Endothelial cell of umbilical vein (primary cell): ENCODE measurements at regions of chr11 and their contacts with region 1.

Region 1: GRCh38 chr11:1598816-1599215 is 722 bp upstream of the KRTAP5-2 start:
- DNase-seq: no peak
- H3K4me3 ChIP-seq: no peak overlapping the region
- H3K27ac ChIP-seq: no peak overlapping the region
- H3K4me1 ChIP-seq: no peaks in the 10 kb centered on the region
- H3K27me3 ChIP-seq: peaks cover 0 to 5% of the 10 kb centered on the region in 2 experiments
- CTCF ChIP-seq: no peak
- POLR2A ChIP-seq: no peak

Region 2: DNA sequence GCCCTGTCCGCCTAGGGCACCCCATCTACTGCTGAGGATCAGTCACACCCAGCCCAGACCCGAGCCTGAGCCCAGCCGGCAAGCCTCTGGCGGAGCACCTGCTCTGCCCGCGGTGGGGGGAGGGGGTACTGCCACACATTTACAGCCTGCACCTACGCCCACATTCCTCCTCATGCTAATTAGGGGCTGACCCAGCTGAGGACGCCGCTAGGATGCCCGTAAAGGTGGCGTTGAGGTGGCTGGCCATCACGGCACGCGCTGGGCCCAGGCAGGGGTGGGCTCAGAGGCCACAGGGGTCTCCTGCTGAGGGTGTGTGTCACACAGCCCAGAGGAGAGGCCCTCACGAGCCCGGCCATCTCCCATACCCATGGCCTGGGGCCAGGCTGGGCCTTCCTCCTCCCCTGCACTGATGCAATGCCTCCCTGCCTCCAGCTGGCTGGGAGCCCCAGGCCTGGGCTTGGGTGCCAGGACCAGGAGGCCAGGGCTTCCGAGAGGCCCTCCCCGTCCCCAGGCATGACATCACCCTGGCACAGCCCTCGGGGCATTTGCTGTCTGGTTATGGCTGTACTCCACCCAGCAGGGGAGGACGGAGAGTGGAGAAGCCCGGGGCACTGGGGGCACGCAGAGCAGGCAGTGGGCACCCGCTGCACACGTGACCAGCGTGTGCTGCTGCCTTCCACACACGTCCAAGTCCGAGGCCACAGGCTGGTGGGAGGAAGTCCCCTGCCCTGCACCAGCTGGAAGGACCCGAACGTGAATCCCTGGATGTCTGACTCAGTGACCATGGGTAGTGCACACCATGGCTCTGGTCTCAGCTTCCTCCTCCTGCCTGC is 39.5 kb before region 1 on chr11:
- CTCF ChIA-PET with region 1: interaction called, 10 read pairs
- POLR2A ChIA-PET with region 1: no interaction called
- dilution Hi-C with region 1: no loop called
- intact Hi-C with region 1: no loop called
- DNase-seq: no peak
- H3K4me3 ChIP-seq: no peak overlapping the region
- H3K27ac ChIP-seq: no peak overlapping the region
- H3K4me1 ChIP-seq: no peaks in the 10 kb centered on the region
- H3K27me3 ChIP-seq: no peaks in the 10 kb centered on the region
- CTCF ChIP-seq: no peak
- POLR2A ChIP-seq: no peak

Region 3: GRCh38 chr11:1586699-1587098 is 12.1 kb before region 1 on chr11:
- CTCF ChIA-PET with region 1: interaction called, 16 read pairs
- POLR2A ChIA-PET with region 1: no interaction called
- dilution Hi-C with region 1: no loop called
- intact Hi-C with region 1: no loop called
- DNase-seq: no peak
- H3K4me3 ChIP-seq: no peak overlapping the region
- H3K27ac ChIP-seq: no peak overlapping the region
- H3K4me1 ChIP-seq: peaks cover 7% of the 10 kb centered on the region
- H3K27me3 ChIP-seq: no peaks in the 10 kb centered on the region
- CTCF ChIP-seq: no peak
- POLR2A ChIP-seq: no peak

Region 4: DNA sequence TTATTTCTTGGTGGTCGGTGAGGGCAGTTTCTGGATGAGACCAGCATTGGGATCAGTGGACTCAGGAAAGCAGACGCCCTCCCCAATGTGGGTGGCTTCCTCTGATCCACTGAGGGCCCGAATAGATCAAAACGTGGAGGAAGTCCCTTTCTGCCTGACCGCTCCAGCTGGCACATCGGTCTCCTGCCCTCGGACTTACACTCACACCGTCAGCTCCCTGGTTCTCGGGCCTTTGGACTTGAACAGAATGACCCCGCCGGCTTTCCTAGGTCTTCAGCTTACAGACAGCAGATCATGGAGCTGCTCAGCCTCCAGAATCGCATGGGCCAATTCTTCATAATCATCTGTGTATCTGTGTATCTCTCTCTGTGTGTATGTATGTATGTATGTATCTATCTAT is 14.7 kb after region 1 on chr11:
- CTCF ChIA-PET with region 1: interaction called, 24 read pairs
- POLR2A ChIA-PET with region 1: no interaction called
- dilution Hi-C with region 1: no loop called
- intact Hi-C with region 1: no loop called
- DNase-seq: no peak
- H3K4me3 ChIP-seq: no peak overlapping the region
- H3K27ac ChIP-seq: no peak overlapping the region
- H3K4me1 ChIP-seq: no peaks in the 10 kb centered on the region
- H3K27me3 ChIP-seq: peaks cover 2 to 4% of the 10 kb centered on the region in 2 experiments
- CTCF ChIP-seq: no peak
- POLR2A ChIP-seq: no peak

Region 5: GRCh38 chr11:1619449-1619848 is 20.6 kb after region 1 on chr11:
- CTCF ChIA-PET with region 1: interaction called, 24 read pairs
- POLR2A ChIA-PET with region 1: no interaction called
- dilution Hi-C with region 1: no loop called
- intact Hi-C with region 1: loop called (anchors 1 kb)
- DNase-seq: no peak
- H3K4me3 ChIP-seq: no peak overlapping the region
- H3K27ac ChIP-seq: no peak overlapping the region
- H3K4me1 ChIP-seq: no peaks in the 10 kb centered on the region
- H3K27me3 ChIP-seq: peaks cover 2 to 4% of the 10 kb centered on the region in 2 experiments
- CTCF ChIP-seq: no peak
- POLR2A ChIP-seq: no peak

Region 6: GRCh38 chr11:1628506-1629325 is 29.9 kb after region 1 on chr11:
- CTCF ChIA-PET with region 1: interaction called, 25 read pairs
- POLR2A ChIA-PET with region 1: no interaction called
- dilution Hi-C with region 1: no loop called
- intact Hi-C with region 1: loop called (anchors 2 kb)
- DNase-seq: peak; percentile 34
- H3K4me3 ChIP-seq: no peak overlapping the region
- H3K27ac ChIP-seq: no peak overlapping the region
- H3K4me1 ChIP-seq: no peaks in the 10 kb centered on the region
- H3K27me3 ChIP-seq: peaks cover 0 to 8% of the 10 kb centered on the region in 2 experiments
- CTCF ChIP-seq: peak; percentile 95 to 97
- POLR2A ChIP-seq: no peak

Region 7: DNA sequence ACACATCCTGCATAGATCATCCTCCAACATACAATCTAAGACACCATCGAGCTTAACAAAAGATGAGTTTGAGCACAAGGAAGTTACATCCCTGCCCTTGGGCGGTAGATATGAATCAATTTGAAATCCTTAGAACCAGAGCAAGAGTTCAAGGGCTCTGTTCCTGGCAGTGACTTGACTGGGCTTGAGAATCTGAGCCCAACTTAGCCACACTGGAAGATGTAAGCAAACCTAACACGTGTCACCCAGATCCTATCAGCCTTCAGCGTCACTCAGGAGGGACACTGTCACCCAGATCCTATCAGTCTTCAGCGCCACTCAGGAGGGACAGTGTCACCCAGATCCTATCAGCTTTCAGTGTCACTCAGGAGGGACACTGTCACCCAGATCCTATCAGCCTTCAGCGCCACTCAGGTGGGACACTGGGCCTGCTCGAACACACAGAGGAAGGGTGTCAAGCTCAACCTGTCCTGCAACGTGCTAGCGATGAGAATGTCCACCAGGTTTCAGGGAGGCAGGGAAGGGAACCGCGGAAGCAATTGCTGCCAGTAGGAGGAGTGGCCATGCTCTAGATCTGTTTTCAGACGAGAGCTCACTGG is 197.7 kb after region 1 on chr11:
- CTCF ChIA-PET with region 1: no interaction called
- POLR2A ChIA-PET with region 1: no interaction called
- dilution Hi-C with region 1: no loop called
- intact Hi-C with region 1: no loop called
- DNase-seq: no peak
- H3K4me3 ChIP-seq: no peak overlapping the region
- H3K27ac ChIP-seq: no peak overlapping the region
- H3K4me1 ChIP-seq: no peaks in the 10 kb centered on the region
- H3K27me3 ChIP-seq: no peaks in the 10 kb centered on the region
- CTCF ChIP-seq: no peak
- POLR2A ChIP-seq: no peak